ENCODE measurements at regions of chr6 and their contacts with region 1.

Region 1: DNA sequence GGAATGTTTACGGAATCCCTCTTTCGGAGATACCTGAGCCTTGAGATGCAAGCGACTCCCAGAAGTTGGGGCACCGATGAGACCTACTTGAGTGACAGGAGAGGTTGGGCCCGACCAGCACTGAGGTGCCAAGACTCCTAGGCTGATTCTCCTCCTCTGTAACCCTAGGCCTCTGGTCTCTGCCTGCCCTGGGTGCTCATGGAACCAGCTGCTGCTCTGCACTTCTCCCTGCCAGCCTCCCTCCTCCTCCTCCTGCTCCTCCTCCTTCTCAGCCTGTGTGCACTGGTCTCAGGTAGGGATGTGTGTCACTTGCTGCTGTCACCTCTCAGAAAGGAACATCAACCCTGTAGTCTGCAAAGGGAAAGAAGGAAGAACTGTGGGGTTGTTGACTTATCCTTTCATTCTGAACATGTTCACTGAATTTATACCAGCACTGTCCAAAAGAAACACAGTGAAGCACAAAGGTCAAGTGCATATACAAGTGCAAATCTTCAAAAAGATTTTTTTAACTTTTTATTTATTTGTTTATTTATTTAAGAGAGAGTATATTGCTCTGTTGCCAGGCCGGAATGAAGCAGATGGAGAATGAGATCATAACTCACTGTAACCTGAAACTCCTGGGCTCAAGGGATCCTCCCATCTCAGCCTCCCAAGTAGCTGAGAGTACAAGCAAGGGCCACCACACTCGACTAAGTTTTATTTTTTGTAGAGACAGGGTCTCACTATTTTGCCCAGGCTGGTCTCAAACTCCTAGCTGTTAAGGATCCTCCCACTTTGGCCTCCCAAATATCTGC is 913 bp downstream of the BTN2A2 start:
- DNase-seq: peak in 1 of 2 experiments; percentile 12
- H3K4me3 ChIP-seq: peak overlapping the region; percentile 56
- H3K4me3 Mint-ChIP-seq: peak overlapping the region; percentile 100
- H3K27ac Mint-ChIP-seq: peak overlapping the region; percentile 94
- H3K4me1 ChIP-seq: peaks cover 9% of the 10 kb centered on the region
- H3K4me1 Mint-ChIP-seq: peaks cover 22% of the 10 kb centered on the region
- H3K27me3 ChIP-seq: no peaks in the 10 kb centered on the region
- H3K27me3 Mint-ChIP-seq: no peaks in the 10 kb centered on the region
- CTCF ChIP-seq: no peak

Region 2: DNA sequence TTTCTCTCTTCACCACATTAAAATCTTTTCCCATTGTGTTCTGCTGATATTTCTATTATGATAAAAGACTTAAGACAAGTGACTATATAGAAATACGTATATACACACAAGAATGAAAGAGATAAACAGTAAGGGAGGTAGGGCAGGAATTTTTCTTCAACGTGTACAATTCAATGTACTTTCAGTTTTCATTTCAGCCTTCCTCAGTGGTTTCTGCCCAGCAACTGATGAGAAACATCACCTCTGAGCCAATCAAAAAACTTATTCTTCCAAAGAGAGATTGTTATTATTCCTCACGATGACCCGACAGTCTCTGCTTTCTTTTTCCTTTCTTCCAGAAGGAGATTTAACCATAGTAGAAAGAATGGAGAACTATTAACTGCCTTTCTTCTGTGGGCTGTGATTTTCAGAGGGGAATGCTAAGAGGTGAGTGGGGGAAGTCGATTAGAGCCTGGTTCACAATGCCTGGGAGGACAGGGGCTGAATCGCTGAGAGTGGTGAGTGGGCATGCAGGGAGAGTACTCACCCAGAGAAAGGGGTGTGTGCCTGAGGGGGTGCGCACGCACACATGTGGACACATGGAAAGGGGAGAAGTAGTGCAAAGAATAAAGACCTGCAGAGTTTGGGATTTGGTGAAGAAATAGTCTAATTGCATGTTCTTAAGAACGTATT is 18.3 kb after region 1 on chr6 and contains the start of gene BTN3A1:
- CTCF ChIA-PET with region 1: no interaction called
- POLR2A ChIA-PET with region 1: no interaction called
- intact Hi-C with region 1: loop called (anchors 1 kb)
- DNase-seq: peak; percentile 52 to 59
- H3K4me3 ChIP-seq: peak within 1 kb of the TSS; percentile 60
- H3K4me3 Mint-ChIP-seq: peak within 1 kb of the TSS; percentile 68
- H3K27ac Mint-ChIP-seq: peak within 1 kb of the TSS; percentile 2
- H3K4me1 ChIP-seq: 0 out of 2 replicates have a peak, but pooled peaks cover 3% of the 10 kb centered on the region
- H3K4me1 Mint-ChIP-seq: no peaks in the 10 kb centered on the region
- H3K27me3 ChIP-seq: no peaks in the 10 kb centered on the region
- H3K27me3 Mint-ChIP-seq: no peaks in the 10 kb centered on the region
- CTCF ChIP-seq: no peak
- total RNA-seq, gene BTN3A1: 2.0 and 2.6 TPM in 2 replicates

Region 3: GRCh38 chr6:26421259-26422144 is 37.7 kb after region 1 on chr6:
- CTCF ChIA-PET with region 1: no interaction called
- POLR2A ChIA-PET with region 1: no interaction called
- intact Hi-C with region 1: loop called (anchors 2 kb)
- DNase-seq: peak; percentile 69 to 71
- H3K4me3 ChIP-seq: peak overlapping the region; percentile 52
- H3K4me3 Mint-ChIP-seq: no peak overlapping the region
- H3K27ac Mint-ChIP-seq: no peak overlapping the region
- H3K4me1 ChIP-seq: 0 out of 2 replicates have a peak, but pooled peaks cover 4% of the 10 kb centered on the region
- H3K4me1 Mint-ChIP-seq: no peaks in the 10 kb centered on the region
- H3K27me3 ChIP-seq: no peaks in the 10 kb centered on the region
- H3K27me3 Mint-ChIP-seq: no peaks in the 10 kb centered on the region
- CTCF ChIP-seq: no peak

Measured in Caco-2 (cell line).